ENCODE measurements at regions of chr1 and their contacts with region 1.

Region 1: DNA sequence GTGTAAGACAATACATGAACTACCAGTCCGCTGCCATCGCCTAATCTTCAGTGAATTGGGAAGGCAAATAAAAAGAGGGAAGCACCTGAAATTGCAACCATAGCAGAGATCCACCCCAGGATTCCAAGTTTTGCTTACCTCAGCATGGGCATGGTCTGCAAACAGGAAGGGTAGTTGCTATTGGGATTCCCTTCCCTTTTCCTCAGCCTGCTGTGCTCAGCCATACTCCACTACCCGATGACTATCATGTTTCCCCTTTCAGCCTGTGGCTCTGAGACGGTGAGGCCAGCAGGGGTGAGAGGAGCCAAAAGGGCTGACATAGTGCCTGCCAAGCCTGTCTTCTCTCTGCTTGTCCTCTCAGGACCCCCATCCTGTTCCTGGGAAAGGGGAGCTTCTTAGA is 64.2 kb downstream of the GPR137B start:
- DNase-seq: no peak
- H3K4me3 ChIP-seq: no peak overlapping the region
- H3K27ac ChIP-seq: no peak overlapping the region
- H3K4me1 ChIP-seq: peaks cover 3% of the 10 kb centered on the region
- H3K27me3 ChIP-seq: no peaks in the 10 kb centered on the region
- CTCF ChIP-seq: no peak
- POLR2A ChIP-seq: no peak

Region 2: GRCh38 chr1:235632506-235633401 is 573.8 kb before region 1 on chr1:
- CTCF ChIA-PET with region 1: no interaction called
- POLR2A ChIA-PET with region 1: no interaction called
- dilution Hi-C with region 1: no loop called
- intact Hi-C with region 1: loop called (anchors 5 kb)
- DNase-seq: peak; percentile 80
- H3K4me3 ChIP-seq: peak overlapping the region in 2 of 3 experiments; percentile 21 to 62
- H3K27ac ChIP-seq: no peak overlapping the region
- H3K4me1 ChIP-seq: peaks cover 2% of the 10 kb centered on the region
- H3K27me3 ChIP-seq: peaks cover 0 to 2% of the 10 kb centered on the region in 2 experiments
- CTCF ChIP-seq: no peak
- POLR2A ChIP-seq: no peak

Region 3: DNA sequence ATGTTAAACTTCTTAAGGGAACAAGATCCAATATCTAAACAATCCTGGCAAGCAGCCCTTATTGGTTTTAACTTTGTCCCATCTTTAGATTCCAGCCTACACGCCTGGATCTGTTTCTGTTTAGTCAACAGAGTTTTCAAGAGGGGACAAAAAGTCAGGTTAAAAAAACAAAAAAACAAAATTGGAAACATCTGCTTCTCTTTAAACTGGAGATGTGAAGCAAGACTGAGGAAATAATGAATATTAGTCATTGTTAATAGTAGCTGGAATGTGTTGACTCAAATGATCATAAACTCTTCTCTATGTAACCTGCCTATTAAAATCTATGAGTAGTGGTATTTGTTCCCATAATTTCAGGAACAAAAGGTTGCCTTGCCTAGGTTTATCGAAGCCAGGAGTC is 196.7 kb before region 1 on chr1:
- CTCF ChIA-PET with region 1: no interaction called
- POLR2A ChIA-PET with region 1: no interaction called
- dilution Hi-C with region 1: no loop called
- intact Hi-C with region 1: no loop called
- DNase-seq: peak; percentile 87
- H3K4me3 ChIP-seq: no peak overlapping the region
- H3K27ac ChIP-seq: peak overlapping the region; percentile 70
- H3K4me1 ChIP-seq: peaks cover 18% of the 10 kb centered on the region
- H3K27me3 ChIP-seq: no peaks in the 10 kb centered on the region
- CTCF ChIP-seq: no peak
- POLR2A ChIP-seq: no peak

Region 4: DNA sequence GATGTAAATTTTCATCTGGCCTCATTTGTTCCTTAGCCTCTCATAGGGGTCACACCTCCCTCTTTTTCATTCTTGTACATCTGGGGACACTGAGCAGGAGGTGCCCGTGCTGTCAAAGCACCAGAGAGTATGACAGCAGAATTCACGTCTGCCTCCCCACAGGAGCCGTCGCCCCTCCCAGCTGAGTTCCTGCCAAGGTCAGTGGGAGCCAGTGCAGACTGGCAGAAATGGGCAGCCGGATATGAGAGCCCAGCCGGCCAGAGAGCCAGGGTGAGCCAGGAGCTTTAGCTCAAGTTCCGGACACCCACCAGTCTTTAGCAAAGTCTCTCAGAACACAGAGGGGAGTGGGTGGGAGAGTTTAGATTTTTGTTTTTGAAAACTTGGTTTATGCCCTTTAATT is 42.3 kb before region 1 on chr1:
- CTCF ChIA-PET with region 1: no interaction called
- POLR2A ChIA-PET with region 1: no interaction called
- dilution Hi-C with region 1: no loop called
- intact Hi-C with region 1: no loop called
- DNase-seq: no peak
- H3K4me3 ChIP-seq: no peak overlapping the region
- H3K27ac ChIP-seq: no peak overlapping the region
- H3K4me1 ChIP-seq: no peaks in the 10 kb centered on the region
- H3K27me3 ChIP-seq: no peaks in the 10 kb centered on the region
- CTCF ChIP-seq: no peak
- POLR2A ChIP-seq: no peak

Region 5: DNA sequence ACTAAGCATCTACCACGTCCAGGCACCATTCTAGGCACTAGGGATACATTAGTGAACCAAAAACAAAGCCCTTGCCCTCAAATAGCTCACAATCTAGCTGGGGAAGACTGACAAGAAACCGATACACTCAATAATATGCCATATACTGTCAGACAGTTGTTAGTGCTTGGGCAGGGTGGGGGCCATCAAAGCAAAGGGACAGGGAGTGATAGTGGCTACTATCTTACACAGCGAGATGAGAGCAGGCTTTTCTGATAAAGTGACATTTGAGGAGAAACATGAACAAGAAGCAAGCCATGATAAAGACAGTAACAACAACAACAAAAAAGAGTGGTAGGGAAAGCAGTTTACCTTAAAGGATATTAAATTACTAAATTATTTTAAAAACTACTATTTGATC is 34.1 kb after region 1 on chr1:
- CTCF ChIA-PET with region 1: no interaction called
- POLR2A ChIA-PET with region 1: no interaction called
- dilution Hi-C with region 1: no loop called
- intact Hi-C with region 1: no loop called
- DNase-seq: no peak
- H3K4me3 ChIP-seq: no peak overlapping the region
- H3K27ac ChIP-seq: no peak overlapping the region
- H3K4me1 ChIP-seq: no peaks in the 10 kb centered on the region
- H3K27me3 ChIP-seq: no peaks in the 10 kb centered on the region
- CTCF ChIP-seq: no peak
- POLR2A ChIP-seq: no peak

Region 6: GRCh38 chr1:236345728-236346127 is 139.2 kb after region 1 on chr1:
- CTCF ChIA-PET with region 1: no interaction called
- POLR2A ChIA-PET with region 1: no interaction called
- dilution Hi-C with region 1: no loop called
- intact Hi-C with region 1: no loop called
- DNase-seq: no peak
- H3K4me3 ChIP-seq: no peak overlapping the region
- H3K27ac ChIP-seq: no peak overlapping the region
- H3K4me1 ChIP-seq: no peaks in the 10 kb centered on the region
- H3K27me3 ChIP-seq: no peaks in the 10 kb centered on the region
- CTCF ChIP-seq: peak in 1 of 2 donors; percentile 4
- POLR2A ChIP-seq: no peak